Colonic mucosa (tissue), 4 donors: ENCODE measurements at regions of chr7 and their contacts with region 1.

Region 1: DNA sequence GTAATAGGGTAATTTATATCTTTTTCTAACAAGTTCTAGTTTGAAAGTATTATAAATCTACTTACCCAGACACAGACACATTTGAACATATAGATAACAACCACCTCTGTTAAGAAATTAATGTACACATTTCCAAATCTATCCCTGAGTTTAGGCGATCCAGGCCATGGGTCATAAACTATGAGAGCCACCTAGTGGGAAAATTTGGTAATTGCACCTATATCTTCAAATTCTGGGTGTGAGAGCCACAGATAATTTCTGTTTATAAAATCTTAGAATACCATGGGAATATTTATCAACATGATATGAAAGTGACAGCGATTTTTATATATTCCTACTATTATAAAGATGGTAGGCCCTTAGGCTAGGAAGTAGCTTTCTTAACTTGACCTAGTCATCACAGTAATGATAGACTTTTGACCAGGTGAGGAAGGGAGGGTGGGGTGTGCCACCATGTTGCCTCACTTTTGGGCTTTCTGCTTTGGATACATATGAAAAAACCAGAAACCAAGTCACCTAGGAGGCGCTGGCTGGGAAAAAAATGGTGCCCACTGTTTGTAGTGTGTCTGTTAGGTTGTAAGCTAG is 8.0 kb upstream of the EPHA1 start:
- DNase-seq: no peak
- H3K4me3 ChIP-seq: no peak overlapping the region
- H3K27ac ChIP-seq: no peak overlapping the region
- H3K4me1 ChIP-seq: no peaks in the 10 kb centered on the region
- H3K27me3 ChIP-seq: no peaks in the 10 kb centered on the region
- CTCF ChIP-seq: peak; percentile 64

Region 2: DNA sequence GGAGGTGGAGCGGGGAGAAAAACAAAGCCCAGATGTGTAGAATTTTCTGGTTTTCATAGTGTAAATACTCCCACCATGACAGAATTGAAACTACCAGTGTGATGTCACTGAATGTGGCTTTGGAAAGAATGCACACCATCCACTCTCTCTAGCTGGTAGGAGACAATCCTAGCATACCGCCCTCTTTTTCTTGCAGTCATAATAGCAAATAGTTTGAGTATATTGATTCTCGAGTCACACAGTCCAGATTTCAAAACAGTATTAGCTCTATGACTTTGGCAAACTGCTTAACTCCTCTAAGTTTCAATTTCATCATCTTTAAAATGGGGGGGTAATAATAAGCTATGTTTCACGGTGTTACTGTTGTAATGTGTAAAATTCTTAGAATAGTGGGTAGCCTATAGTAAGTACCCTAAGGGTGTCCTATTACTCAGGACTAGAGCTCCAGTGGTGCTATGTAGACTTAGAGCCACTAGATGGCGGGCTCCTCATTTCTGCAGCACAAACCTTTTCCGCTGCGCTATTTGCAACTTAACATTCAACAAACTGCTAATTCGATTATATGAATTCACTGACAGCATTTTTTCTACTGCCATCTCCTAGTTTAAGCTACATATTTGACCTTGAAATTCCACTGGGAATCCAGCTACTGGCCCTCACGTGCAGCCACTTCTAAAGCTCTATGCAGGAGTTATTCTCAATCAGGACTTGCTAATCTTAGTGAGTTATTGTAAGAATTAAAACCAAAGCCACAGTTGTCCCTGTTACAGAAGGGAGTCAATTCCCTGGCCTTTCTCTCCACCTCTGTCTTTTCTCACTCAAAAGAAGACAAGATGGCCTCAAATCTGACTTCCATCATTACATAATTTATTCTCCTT is 176.1 kb before region 1 on chr7:
- intact Hi-C with region 1: loop called (anchors 5 kb)
- DNase-seq: peak; percentile 78
- H3K4me3 ChIP-seq: no peak overlapping the region
- H3K27ac ChIP-seq: peak overlapping the region; percentile 1
- H3K4me1 ChIP-seq: peaks cover 10% of the 10 kb centered on the region
- H3K27me3 ChIP-seq: no peaks in the 10 kb centered on the region
- CTCF ChIP-seq: peak; percentile 92

Region 3: GRCh38 chr7:143380255-143380645 is 36.4 kb before region 1 on chr7:
- intact Hi-C with region 1: loop called (anchors 5 kb)
- DNase-seq: peak; percentile 92
- H3K4me3 ChIP-seq: peak overlapping the region; percentile 89
- H3K27ac ChIP-seq: peak overlapping the region; percentile 100
- H3K4me1 ChIP-seq: peaks cover 7% of the 10 kb centered on the region
- H3K27me3 ChIP-seq: no peaks in the 10 kb centered on the region
- CTCF ChIP-seq: peak; percentile 89

Region 4: DNA sequence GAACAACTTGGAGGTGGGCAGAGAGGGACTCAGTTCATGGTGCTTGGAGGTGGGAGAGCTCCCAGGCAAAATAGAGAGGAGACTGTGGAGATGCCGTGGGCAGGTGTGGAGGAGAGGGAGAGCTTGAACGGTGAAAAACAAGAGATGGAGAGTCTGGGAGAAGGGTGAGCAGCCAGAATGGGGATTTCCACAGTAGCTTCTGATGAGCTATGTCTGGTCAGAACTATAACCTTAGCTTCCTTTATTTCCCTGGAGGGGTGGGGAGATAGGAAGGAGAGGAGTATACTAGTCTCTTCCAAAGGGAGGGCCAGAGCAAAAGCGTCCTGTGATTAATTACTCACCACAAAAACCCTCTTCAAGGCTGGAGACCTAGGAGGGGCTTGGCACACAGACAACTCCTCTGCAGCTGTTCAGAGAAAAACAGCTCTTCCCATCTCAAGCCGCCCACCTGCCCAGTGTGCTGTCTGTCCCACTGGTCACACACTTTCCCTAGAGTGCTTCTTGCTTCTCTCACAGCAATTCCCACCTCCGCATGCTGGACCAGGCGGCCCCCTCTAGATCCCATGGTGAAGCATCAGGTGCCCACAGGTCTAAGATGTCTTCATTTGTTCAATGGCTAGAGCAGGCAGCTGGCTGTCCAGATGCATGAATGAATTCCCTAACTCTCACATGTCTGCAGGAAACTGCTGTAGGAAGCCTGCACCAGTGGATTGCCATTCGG is 102.9 kb after region 1 on chr7:
- intact Hi-C with region 1: no loop called
- DNase-seq: no peak
- H3K4me3 ChIP-seq: no peak overlapping the region
- H3K27ac ChIP-seq: no peak overlapping the region
- H3K4me1 ChIP-seq: no peaks in the 10 kb centered on the region
- H3K27me3 ChIP-seq: no peaks in the 10 kb centered on the region
- CTCF ChIP-seq: no peak